ENCODE measurements at regions of chr2 and their contacts with region 1.

Region 1: GRCh38 chr2:64330281-64331113 is 123.5 kb upstream of the LGALSL start:
- DNase-seq: peak; percentile 65 to 93
- ATAC-seq: peak; percentile 10 to 50 (median 36)
- H3K4me3 ChIP-seq: no peak overlapping the region
- H3K4me3 Mint-ChIP-seq: peak overlapping the region; percentile 70
- H3K27ac ChIP-seq: no peak overlapping the region
- H3K27ac Mint-ChIP-seq: peak overlapping the region in 1 of 2 donors; percentile 54
- H3K4me1 ChIP-seq: peaks cover 36% of the 10 kb centered on the region
- H3K4me1 Mint-ChIP-seq: peaks cover 36 to 38% of the 10 kb centered on the region in 2 donors
- H3K27me3 ChIP-seq: no peaks in the 10 kb centered on the region
- H3K27me3 Mint-ChIP-seq: peaks cover 0 to 2% of the 10 kb centered on the region in 2 donors
- CTCF ChIP-seq: peak; percentile 89

Region 2: GRCh38 chr2:64052468-64053241 is 277.8 kb before region 1 on chr2:
- intact Hi-C with region 1: loop called (anchors 1 kb)
- DNase-seq: peak in 1 of 2 donors; percentile 46
- ATAC-seq: no peak
- H3K4me3 ChIP-seq: no peak overlapping the region
- H3K4me3 Mint-ChIP-seq: no peak overlapping the region
- H3K27ac ChIP-seq: no peak overlapping the region
- H3K27ac Mint-ChIP-seq: no peak overlapping the region
- H3K4me1 ChIP-seq: no peaks in the 10 kb centered on the region
- H3K4me1 Mint-ChIP-seq: peaks cover 6 to 7% of the 10 kb centered on the region in 2 donors
- H3K27me3 ChIP-seq: no peaks in the 10 kb centered on the region
- H3K27me3 Mint-ChIP-seq: peaks cover 0 to 5% of the 10 kb centered on the region in 2 donors
- CTCF ChIP-seq: no peak

Region 3: DNA sequence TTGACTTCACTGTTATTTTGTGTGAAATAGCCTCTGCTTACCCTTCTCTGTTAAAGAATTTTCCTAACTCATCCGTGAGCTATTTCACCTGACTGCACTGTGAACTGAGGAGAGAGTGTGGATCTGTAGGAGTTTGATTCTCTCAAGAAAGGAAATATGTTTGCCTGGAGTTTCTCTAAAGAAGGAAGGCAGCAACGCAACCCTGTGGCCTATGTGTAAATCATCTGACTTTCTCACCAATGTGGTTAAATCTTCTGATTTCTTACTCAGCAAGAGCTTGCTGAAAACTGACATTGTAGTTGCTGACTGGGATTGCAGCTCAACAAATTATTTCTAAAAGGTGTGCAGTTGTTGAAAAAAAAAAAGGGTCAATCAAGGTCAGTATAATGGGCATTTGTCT is 32.3 kb before region 1 on chr2:
- intact Hi-C with region 1: loop called (anchors 1 kb)
- DNase-seq: no peak
- ATAC-seq: peak; percentile 44 to 80 (median 80)
- H3K4me3 ChIP-seq: no peak overlapping the region
- H3K4me3 Mint-ChIP-seq: peak overlapping the region; percentile 41
- H3K27ac ChIP-seq: no peak overlapping the region
- H3K27ac Mint-ChIP-seq: peak overlapping the region in 1 of 2 donors; percentile 67
- H3K4me1 ChIP-seq: peaks cover 7% of the 10 kb centered on the region
- H3K4me1 Mint-ChIP-seq: peaks cover 27 to 29% of the 10 kb centered on the region in 2 donors
- H3K27me3 ChIP-seq: peaks cover 2% of the 10 kb centered on the region
- H3K27me3 Mint-ChIP-seq: peaks cover 22 to 47% of the 10 kb centered on the region in 2 donors
- CTCF ChIP-seq: no peak

Region 4: GRCh38 chr2:64562148-64562784 is 231.8 kb after region 1 on chr2:
- intact Hi-C with region 1: loop called (anchors 2 kb)
- DNase-seq: peak in 1 of 2 donors; percentile 66
- ATAC-seq: peak in 1 of 3 donors; percentile 63
- H3K4me3 ChIP-seq: no peak overlapping the region
- H3K4me3 Mint-ChIP-seq: no peak overlapping the region
- H3K27ac ChIP-seq: no peak overlapping the region
- H3K27ac Mint-ChIP-seq: peak overlapping the region in 1 of 2 donors; percentile 18
- H3K4me1 ChIP-seq: no peaks in the 10 kb centered on the region
- H3K4me1 Mint-ChIP-seq: peaks cover 27 to 33% of the 10 kb centered on the region in 2 donors
- H3K27me3 ChIP-seq: no peaks in the 10 kb centered on the region
- H3K27me3 Mint-ChIP-seq: no peaks in the 10 kb centered on the region
- CTCF ChIP-seq: peak; percentile 36

Region 5: DNA sequence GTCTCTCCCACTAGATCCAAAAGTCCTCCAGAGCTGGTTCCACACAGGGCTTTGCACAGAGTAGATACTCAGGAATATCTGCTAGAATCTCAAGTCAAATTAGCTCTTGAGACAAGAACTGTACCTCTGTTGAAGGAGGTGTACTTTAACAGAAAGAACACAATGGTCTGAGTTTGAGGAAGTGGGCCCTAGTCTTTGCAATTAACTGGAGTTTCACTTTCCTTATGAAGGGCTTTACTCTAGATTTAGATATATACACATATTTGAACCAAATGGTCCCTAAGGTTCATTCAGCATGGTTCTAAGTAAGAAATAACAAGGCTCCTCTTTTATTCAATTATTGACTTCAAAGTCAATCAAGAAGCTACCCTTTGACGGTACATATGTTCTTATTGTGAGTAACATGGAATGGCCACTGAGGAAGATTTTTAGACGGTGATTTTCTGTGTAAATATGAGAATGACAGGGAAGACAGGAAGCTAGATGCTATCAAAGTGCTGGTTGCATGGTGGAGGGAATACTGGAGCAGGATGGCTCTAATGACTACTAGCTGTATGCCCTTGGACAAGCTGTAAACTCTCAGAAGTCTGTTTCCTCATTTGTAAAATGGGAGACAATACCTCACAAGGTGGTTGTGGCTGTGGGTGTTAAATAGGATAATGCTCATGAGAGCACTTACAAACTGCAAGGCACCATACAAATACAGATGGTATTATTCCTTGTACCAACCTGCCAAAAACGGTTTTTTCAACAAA is 396.7 kb after region 1 on chr2:
- intact Hi-C with region 1: no loop called
- DNase-seq: peak in 1 of 2 donors; percentile 61
- ATAC-seq: peak; percentile 74 to 83 (median 74)
- H3K4me3 ChIP-seq: peak overlapping the region; percentile 10
- H3K4me3 Mint-ChIP-seq: peak overlapping the region; percentile 77
- H3K27ac ChIP-seq: peak overlapping the region; percentile 80
- H3K27ac Mint-ChIP-seq: peak overlapping the region; percentile 87 to 90
- H3K4me1 ChIP-seq: peaks cover 17% of the 10 kb centered on the region
- H3K4me1 Mint-ChIP-seq: peaks cover 38 to 40% of the 10 kb centered on the region in 2 donors
- H3K27me3 ChIP-seq: no peaks in the 10 kb centered on the region
- H3K27me3 Mint-ChIP-seq: no peaks in the 10 kb centered on the region
- CTCF ChIP-seq: no peak

Region 6: DNA sequence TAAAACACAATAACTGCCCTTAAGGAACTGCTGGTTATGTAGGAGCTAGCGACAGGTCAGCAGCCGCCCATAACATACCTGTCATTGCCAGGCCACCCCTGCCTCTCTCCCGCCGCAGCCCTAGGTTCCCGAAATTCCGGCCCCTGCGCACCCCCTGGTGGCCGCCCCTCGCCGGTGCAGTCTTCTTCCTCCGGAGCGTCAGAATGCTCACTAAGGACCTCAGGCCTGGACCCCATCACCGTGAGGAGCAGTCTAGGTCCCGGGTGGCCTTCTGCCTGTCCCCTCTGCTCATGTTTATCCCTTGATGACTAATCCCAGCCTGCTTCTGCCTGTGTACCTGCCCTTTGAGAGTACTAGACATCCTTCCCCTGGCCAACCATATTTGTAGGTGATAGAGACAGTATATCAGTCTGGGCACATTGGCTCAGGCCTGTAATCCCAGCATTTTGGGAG is 543.0 kb after region 1 on chr2:
- intact Hi-C with region 1: loop called (anchors 2 kb)
- DNase-seq: peak; percentile 80 to 83
- ATAC-seq: peak; percentile 91 to 98 (median 98)
- H3K4me3 ChIP-seq: no peak overlapping the region
- H3K4me3 Mint-ChIP-seq: no peak overlapping the region
- H3K27ac ChIP-seq: no peak overlapping the region
- H3K27ac Mint-ChIP-seq: peak overlapping the region in 1 of 2 donors; percentile 17
- H3K4me1 ChIP-seq: peaks cover 8% of the 10 kb centered on the region
- H3K4me1 Mint-ChIP-seq: peaks cover 0 to 8% of the 10 kb centered on the region in 2 donors
- H3K27me3 ChIP-seq: no peaks in the 10 kb centered on the region
- H3K27me3 Mint-ChIP-seq: peaks cover 2 to 5% of the 10 kb centered on the region in 2 donors
- CTCF ChIP-seq: peak; percentile 93